Posterior vena cava (tissue), 2 donors: ENCODE measurements at regions of chr1 and their contacts with region 1.

Region 1: DNA sequence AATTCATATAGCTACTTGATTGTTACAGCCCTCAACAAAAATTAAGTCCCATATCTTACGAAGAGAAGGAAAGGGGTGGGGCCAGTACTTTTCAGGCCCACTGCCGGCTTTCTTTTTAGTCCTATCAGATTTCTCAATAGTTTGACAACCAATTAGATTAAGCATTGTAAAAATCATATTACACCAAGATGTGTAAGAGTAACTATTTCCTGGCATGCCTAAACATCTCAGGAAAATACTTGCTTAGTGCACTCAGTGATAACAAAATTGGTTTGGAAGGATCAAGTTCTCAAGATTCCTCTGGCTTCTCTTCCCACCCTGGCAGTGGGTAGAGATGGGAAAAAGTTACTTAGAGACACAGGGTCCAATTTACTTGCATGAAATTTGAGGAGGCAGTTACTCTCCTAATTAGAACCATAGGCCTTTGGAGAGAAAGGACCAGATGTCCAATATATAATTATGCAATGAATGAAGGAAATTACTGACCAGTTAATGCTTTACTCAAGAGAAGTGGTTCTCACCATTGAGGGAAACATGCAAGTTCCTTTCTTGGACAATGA is 30.1 kb downstream of the STPG1 start:
- DNase-seq: no peak

Region 2: DNA sequence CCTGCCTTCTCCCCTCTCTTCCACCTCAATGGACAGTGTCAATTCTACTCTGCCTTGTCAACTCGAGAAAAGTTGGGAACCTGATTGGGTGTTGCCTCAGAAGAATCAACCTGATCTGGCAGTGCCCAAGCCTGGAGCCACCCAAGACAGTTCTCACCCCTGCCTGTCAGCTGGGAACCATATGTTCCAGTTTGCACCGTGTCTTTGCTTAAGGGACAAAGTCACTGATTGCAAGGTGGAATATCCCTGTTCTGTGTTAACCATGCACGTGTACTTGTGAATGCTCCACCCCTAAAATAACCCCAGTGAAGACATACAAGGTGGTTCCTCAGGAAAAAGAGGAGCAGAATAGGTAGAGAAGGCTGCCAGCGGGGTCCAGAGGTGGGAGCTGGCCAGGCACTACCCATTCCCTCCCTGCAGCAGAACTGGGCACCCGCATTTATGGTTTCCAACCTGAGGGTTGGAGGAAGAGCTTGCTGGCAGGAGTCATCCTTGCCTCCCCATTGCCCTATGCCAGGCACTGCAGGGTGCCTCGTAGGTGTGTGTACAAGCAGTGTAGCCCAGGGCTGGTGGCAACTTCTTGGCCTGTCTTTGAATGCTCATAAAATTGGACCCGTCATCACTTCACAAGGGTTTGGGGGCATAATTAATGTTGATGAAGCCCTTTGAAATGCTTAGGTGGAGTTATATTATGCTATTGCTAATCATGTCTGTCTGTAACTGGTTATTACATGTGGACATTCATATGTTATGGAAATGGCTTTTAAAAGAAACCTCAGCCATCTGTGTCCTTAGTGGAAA is 43.5 kb after region 1 on chr1:
- intact Hi-C with region 1: loop called in 1 of 2 experiments (anchors 1 kb)
- DNase-seq: no peak